OCI-LY7 (cell line): ENCODE measurements at regions of chr17 and their contacts with region 1.

Region 1: GRCh38 chr17:5468075-5468473 is 708 bp downstream of the DHX33 start:
- DNase-seq: peak; percentile 27
- H3K4me3 ChIP-seq: peak overlapping the region; percentile 86
- H3K27ac ChIP-seq: peak overlapping the region; percentile 45
- H3K4me1 ChIP-seq: peaks cover 24% of the 10 kb centered on the region
- CTCF ChIP-seq: no peak

Region 2: DNA sequence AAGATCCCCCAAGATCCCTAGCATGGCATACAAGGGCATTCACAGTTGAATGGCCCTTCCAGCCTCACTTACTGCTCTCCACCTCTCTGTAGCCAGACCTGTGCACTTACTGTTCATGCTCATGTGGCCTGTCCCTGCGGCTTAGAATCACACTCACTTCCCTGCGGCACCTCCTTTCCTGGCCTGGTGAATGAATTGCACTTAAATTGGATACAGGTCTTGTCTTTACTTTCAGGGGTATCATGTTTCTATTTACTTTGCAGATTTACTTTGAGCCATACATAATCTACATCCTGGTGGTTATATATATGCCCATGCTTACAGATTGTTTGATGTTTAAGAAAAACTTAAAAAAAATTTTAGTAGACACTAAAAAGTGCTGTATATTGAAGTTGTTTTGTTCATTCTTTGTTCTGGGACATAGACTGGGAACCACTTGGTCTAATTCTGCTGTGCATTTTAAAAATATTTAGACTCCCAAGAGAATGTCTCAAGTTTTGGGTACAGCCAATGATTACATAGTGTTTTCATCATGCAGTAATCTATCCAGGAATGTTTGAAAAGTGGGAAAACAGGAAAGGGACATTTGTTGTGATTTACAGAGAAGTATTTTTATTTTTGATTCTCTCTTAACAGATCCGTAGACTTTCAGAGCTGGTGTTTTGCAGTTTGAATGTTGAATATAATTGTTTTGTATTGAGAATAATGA is 112.5 kb before region 1 on chr17:
- CTCF ChIA-PET with region 1: no interaction called
- POLR2A ChIA-PET with region 1: no interaction called
- intact Hi-C with region 1: no loop called
- DNase-seq: no peak
- H3K4me3 ChIP-seq: no peak overlapping the region
- H3K27ac ChIP-seq: no peak overlapping the region
- H3K4me1 ChIP-seq: no peaks in the 10 kb centered on the region
- CTCF ChIP-seq: no peak

Region 3: DNA sequence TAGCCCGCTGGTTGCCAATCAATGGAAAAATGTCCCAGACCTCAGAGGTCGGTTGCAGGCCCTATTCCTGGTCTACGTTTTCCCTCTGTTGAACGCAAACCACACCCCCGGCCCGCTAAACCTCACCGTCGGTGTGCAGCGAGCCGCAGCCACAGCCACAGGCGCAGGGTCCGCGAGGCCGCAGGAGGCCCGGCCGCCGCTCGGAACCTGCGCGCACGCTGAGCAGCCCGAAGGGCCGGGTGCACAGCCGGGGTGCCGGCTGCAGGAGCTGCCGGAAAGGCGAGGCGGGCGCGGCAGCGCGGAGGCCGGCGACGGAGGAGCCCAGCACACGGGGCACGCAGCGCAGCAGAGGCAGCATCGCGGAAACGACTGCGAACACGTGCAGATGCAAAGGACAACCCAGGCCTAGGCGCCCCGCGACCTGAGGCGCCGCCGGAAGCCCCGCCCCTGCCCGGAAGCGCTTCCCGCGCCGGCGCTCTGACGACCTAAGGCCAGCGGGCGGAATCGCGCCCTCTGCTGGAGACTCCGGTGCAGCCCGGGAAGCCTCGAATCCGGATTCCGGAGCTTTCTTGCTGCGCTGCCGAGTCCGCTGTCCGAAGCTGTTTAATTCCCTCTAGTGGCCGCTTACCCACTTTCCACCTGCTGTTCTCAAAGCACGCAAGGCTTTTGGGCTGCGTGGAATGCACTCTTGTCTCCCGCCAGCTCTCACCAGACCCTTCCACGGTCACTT is 29.2 kb before region 1 on chr17 and contains the start of gene C1QBP:
- CTCF ChIA-PET with region 1: interaction called, 4 read pairs
- POLR2A ChIA-PET with region 1: no interaction called
- intact Hi-C with region 1: loop called (anchors 2 kb)
- DNase-seq: peak; percentile 96
- H3K4me3 ChIP-seq: peak within 1 kb of the TSS; percentile 84
- H3K27ac ChIP-seq: peak within 1 kb of the TSS; percentile 58
- H3K4me1 ChIP-seq: peaks cover 27% of the 10 kb centered on the region
- CTCF ChIP-seq: peak; percentile 94
- total RNA-seq, gene C1QBP: 257 and 260 TPM in 2 replicates

Region 4: GRCh38 chr17:5486204-5487124 is 18.4 kb after region 1 on chr17 and contains the start of gene MIS12:
- CTCF ChIA-PET with region 1: interaction called, 4 read pairs
- POLR2A ChIA-PET with region 1: interaction called, 7 read pairs
- intact Hi-C with region 1: loop called (anchors 1 kb)
- DNase-seq: peak; percentile 99
- H3K4me3 ChIP-seq: peak within 1 kb of the TSS; percentile 85
- H3K27ac ChIP-seq: peak within 1 kb of the TSS; percentile 89
- H3K4me1 ChIP-seq: peaks cover 28% of the 10 kb centered on the region
- CTCF ChIP-seq: no peak
- total RNA-seq, gene MIS12: 21.0 and 26.4 TPM in 2 replicates

Region 5: GRCh38 chr17:5619088-5619740 is 151.1 kb after region 1 on chr17:
- CTCF ChIA-PET with region 1: no interaction called
- POLR2A ChIA-PET with region 1: no interaction called
- intact Hi-C with region 1: no loop called
- DNase-seq: peak; percentile 8
- H3K4me3 ChIP-seq: no peak overlapping the region
- H3K27ac ChIP-seq: no peak overlapping the region
- H3K4me1 ChIP-seq: no peaks in the 10 kb centered on the region
- CTCF ChIP-seq: no peak